Right lobe of liver (tissue), 6 donors: ENCODE measurements at regions of chr1 and their contacts with region 1.

Region 1: DNA sequence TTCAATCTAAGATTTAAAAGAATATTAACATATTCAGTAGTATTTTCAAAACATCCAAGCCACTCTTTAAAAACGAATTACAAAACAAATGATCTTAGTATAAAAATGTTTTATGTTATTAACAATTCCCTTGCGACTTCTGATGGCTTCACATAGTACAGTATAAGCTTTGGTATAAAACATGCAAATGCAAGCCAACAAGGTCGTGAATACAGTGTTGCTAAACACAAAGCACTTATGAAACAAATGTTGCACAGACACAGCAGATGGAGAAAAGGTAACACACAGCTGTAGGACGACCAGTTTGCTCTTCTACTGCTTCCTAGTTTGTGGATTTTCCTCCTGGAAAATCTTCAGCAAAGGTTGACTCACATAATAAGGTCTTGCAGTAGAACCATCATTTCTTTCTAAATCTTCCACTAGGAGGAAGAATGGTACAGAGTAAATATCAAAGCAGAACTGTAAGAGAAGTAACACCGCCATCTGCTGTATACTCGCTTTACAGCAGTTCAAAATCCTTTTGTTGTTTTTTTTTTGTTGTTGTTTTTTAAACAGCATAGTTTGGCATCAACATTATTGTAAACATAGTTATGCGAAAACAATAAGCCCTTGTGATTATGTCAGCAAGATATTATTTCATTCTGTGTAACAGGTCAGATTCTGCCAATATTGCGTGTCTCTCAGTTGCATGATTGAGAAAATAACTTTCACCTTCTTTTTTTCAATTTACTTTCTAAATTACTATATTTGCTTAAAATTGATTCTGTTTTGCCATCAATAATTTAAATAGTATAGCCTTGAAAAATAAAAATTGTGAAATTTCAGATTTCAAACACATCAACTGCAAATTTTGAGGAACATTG is 69.5 kb downstream of the LHX8 start:
- DNase-seq: no peak
- ATAC-seq: peak; percentile 87 to 96 (median 88)
- H3K4me3 ChIP-seq: no peak overlapping the region
- H3K27ac ChIP-seq: no peak overlapping the region
- H3K4me1 ChIP-seq: no peaks in the 10 kb centered on the region
- H3K27me3 ChIP-seq: no peaks in the 10 kb centered on the region
- CTCF ChIP-seq: peak; percentile 62 to 81 (median 74)
- POLR2A ChIP-seq: no peak

Region 2: GRCh38 chr1:74767490-74767889 is 436.2 kb before region 1 on chr1:
- intact Hi-C with region 1: loop called in 1 of 2 experiments (anchors 5 kb)
- DNase-seq: no peak
- ATAC-seq: peak; percentile 41 to 59 (median 50)
- H3K4me3 ChIP-seq: no peak overlapping the region
- H3K27ac ChIP-seq: no peak overlapping the region
- H3K4me1 ChIP-seq: no peaks in the 10 kb centered on the region
- H3K27me3 ChIP-seq: no peaks in the 10 kb centered on the region
- CTCF ChIP-seq: peak in 3 of 4 donors; percentile 23 to 39 (median 33)
- POLR2A ChIP-seq: no peak

Region 3: DNA sequence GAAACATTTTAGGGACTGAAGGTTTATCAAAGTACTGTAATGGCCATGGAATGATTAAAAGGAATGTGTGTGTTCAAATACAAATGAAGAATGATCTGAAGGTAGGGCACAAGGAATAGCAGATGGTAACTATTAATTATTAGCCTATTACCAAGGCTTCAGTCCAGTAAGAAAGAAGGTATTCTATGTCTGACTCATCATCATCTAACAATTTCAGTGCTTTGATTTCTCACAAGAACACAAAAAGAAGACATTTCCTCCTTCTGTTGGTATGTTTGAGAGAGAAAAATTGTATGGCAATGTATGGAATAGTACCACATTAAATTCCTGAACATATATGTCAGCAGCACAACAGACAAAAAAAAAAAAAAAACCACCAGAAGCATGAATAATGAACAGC is 413.2 kb before region 1 on chr1:
- intact Hi-C with region 1: loop called in 1 of 2 experiments (anchors 10 kb)
- DNase-seq: no peak
- ATAC-seq: no peak
- H3K4me3 ChIP-seq: no peak overlapping the region
- H3K27ac ChIP-seq: no peak overlapping the region
- H3K4me1 ChIP-seq: no peaks in the 10 kb centered on the region
- H3K27me3 ChIP-seq: no peaks in the 10 kb centered on the region
- CTCF ChIP-seq: no peak
- POLR2A ChIP-seq: no peak